Tibial artery (tissue), 4 donors: ENCODE measurements at regions of chr11 and their contacts with region 1.

Region 1: GRCh38 chr11:67507864-67508485 is at the start of gene CDK2AP2:
- DNase-seq: peak; percentile 99 to 100
- H3K4me3 ChIP-seq: peak within 1 kb of the TSS; percentile 76 to 80
- H3K27ac ChIP-seq: peak within 1 kb of the TSS; percentile 92 to 99
- H3K4me1 ChIP-seq: peaks cover 0 to 49% (median 43%) of the 10 kb centered on the region in 4 donors
- H3K27me3 ChIP-seq: peaks cover 0 to 5% of the 10 kb centered on the region in 2 donors
- CTCF ChIP-seq: peak in 1 of 2 experiments; percentile 29

Region 2: DNA sequence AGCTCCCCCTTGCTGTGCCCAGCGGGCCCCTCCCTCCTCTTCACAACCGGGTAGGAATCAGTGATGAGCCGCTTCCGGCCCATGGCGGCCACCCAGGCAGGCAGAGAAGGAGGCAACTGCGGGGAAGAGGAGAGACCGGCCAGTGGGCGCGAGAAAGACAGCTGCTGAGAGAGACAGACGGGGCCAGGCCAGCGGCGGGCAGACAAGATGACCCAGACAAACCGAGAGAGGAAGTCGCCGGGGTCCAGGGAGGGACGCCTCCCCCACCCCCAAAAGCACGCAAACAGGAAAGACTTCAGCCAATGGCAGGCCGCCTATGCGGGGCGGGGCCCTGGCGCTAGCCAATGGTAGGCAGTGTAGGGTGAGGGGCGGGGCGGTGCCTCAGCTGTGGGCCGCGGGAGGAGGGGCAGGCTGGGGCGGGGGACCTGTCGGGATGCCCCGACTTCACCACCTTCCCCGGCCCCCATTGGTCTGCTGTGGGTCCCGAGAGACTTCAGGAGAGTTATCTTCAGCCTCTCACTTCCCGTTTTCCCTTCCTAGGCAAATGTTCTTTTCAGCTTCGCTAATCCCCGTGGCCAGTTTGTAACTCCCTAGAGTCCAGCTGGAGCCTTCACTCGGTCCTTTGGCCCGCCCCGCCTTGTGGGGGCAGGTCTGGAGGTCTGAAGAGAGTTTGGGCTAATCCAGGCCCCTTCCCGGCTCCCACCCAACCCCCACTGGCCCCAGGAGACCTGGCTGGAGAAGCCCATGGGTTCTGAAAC is 154.5 kb before region 1 on chr11 and contains the start of gene POLD4:
- intact Hi-C with region 1: loop called (anchors 5 kb)
- DNase-seq: peak; percentile 99 to 100
- H3K4me3 ChIP-seq: peak within 1 kb of the TSS; percentile 65 to 85
- H3K27ac ChIP-seq: peak within 1 kb of the TSS; percentile 96 to 97
- H3K4me1 ChIP-seq: peaks cover 8 to 72% (median 60%) of the 10 kb centered on the region in 4 donors
- H3K27me3 ChIP-seq: no peaks in the 10 kb centered on the region
- CTCF ChIP-seq: peak in 1 of 2 experiments; percentile 4

Region 3: GRCh38 chr11:67382276-67383136 is 125.5 kb before region 1 on chr11:
- intact Hi-C with region 1: no loop called
- DNase-seq: peak; percentile 78 to 88
- H3K4me3 ChIP-seq: no peak overlapping the region
- H3K27ac ChIP-seq: no peak overlapping the region
- H3K4me1 ChIP-seq: peaks cover 0 to 10% (median 8%) of the 10 kb centered on the region in 4 donors
- H3K27me3 ChIP-seq: peaks cover 0 to 7% of the 10 kb centered on the region in 2 donors
- CTCF ChIP-seq: peak; percentile 98 to 99

Region 4: GRCh38 chr11:67401495-67402191 is 106.3 kb before region 1 on chr11 and contains the start of gene PPP1CA:
- intact Hi-C with region 1: loop called (anchors 2 kb)
- DNase-seq: peak; percentile 82 to 95
- H3K4me3 ChIP-seq: peak within 1 kb of the TSS; percentile 89
- H3K27ac ChIP-seq: peak within 1 kb of the TSS; percentile 91 to 95
- H3K4me1 ChIP-seq: peaks cover 0 to 31% (median 25%) of the 10 kb centered on the region in 4 donors
- H3K27me3 ChIP-seq: peaks cover 0 to 29% of the 10 kb centered on the region in 2 donors
- CTCF ChIP-seq: peak; percentile 43 to 44

Region 5: DNA sequence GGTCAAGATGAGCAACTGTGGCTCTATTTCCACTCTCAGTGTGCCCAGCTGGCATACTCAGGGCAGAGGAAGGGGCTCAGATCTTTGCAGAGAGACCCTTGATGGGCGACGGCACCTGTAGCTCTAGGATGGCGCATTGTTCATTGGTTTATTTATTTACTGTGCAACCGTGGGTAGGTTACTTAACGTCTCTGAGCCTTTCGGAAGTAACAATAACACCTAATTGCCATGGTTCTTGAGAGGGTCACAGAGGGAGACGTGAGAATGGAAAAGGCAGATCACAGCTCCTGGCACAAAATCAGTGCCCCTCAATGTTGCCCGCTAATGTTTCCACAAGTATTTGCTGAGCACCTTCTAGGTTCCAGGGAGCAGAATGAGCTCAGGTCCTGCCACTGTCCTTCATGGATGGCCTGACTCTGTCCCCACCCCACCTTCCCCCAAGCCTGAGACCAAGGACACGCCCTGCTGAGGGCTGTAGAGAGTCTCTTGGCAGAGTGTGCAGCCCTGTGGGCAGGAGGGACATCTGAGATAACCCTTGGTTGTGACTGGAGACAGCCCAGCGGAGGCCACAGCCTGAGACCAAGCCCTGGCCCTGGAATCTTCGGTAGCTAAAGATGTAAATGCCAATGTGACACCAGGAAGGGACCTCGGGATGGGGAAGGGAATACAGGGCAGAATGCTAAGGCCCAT is 167.2 kb after region 1 on chr11:
- intact Hi-C with region 1: no loop called
- DNase-seq: no peak
- H3K4me3 ChIP-seq: no peak overlapping the region
- H3K27ac ChIP-seq: no peak overlapping the region
- H3K4me1 ChIP-seq: no peaks in the 10 kb centered on the region
- H3K27me3 ChIP-seq: peaks cover 0 to 42% of the 10 kb centered on the region in 2 donors
- CTCF ChIP-seq: no peak